ENCODE measurements at regions of chr7 and their contacts with region 1.

Region 1: DNA sequence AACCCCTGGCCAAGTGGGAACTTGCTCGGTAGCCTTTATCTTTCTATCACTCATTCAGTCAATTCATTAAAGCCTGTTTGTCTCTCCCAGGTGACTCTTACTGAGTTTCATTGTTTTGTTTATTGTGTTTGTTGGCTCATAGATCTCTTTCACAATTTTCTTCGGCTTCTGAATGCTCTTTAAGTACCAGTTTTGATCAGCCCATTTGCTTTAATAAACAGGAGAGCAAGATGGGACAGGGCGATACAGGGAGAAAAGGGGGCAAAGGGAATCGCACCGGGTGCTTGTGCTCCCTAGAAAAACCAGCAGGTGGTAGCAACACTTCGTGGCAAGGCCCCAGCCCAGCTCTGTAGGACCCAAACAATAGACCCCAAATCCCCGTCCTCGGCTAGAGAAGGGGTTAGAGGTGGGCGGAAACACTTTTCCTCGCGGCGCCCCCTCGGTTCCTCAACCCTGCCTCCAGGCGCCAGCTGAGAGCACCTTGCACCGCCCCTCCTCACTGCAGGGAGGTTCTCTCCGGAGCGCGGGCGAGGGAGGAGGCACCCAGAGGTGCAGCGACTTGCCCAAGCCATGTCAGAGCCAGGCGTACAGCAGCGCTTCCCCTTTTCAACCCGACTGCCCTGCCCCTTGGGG is 1.0 kb upstream of the EPHB6 start:
- DNase-seq: peak; percentile 42 to 81 (median 62)
- ATAC-seq: peak; percentile 82 to 84
- H3K4me3 Mint-ChIP-seq: peak overlapping the region; percentile 89 to 99 (median 96)
- H3K27ac Mint-ChIP-seq: peak overlapping the region; percentile 33 to 94 (median 88)
- H3K4me1 Mint-ChIP-seq: peaks cover 12 to 25% (median 20%) of the 10 kb centered on the region in 4 donors
- H3K27me3 Mint-ChIP-seq: peaks cover 0 to 3% (median 0%) of the 10 kb centered on the region in 5 donors

Region 2: DNA sequence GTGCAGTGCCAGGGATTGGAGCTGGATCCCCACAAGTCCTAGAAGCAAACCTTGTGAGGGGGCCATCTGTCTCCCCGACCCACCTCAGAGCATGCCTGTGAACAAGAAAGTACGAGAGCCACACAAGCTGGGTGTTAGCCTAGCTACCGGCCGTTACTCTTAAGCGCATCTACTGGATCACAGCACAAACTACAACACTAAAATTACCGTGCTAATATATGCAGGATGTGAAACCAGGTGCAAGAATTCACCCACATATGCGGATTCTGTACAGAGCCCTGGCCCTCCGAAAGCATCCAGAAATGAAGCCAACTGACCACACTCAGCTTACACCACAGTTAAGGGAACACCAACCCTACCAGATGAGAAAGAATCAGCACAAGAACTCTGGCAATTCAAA is 120.6 kb before region 1 on chr7:
- POLR2A ChIA-PET with region 1: no interaction called
- DNase-seq: no peak
- ATAC-seq: no peak
- H3K4me3 Mint-ChIP-seq: no peak overlapping the region
- H3K27ac Mint-ChIP-seq: no peak overlapping the region
- H3K4me1 Mint-ChIP-seq: peaks cover 0 to under 1% (median 0%) of the 10 kb centered on the region in 4 donors
- H3K27me3 Mint-ChIP-seq: no peaks in the 10 kb centered on the region

Region 3: GRCh38 chr7:142866361-142867058 is 12.7 kb after region 1 on chr7:
- POLR2A ChIA-PET with region 1: interaction called, 18 read pairs
- DNase-seq: peak in 3 of 10 donors; percentile 7 to 63 (median 23)
- ATAC-seq: no peak
- H3K4me3 Mint-ChIP-seq: no peak overlapping the region
- H3K27ac Mint-ChIP-seq: peak overlapping the region in 2 of 10 donors; percentile 60 to 71
- H3K4me1 Mint-ChIP-seq: peaks cover 0 to 5% (median 2%) of the 10 kb centered on the region in 4 donors
- H3K27me3 Mint-ChIP-seq: no peaks in the 10 kb centered on the region

Region 4: GRCh38 chr7:143003393-143004051 is 149.7 kb after region 1 on chr7:
- POLR2A ChIA-PET with region 1: interaction called, 12 read pairs
- DNase-seq: peak in 8 of 10 donors; percentile 8 to 74 (median 57)
- ATAC-seq: peak; percentile 75 to 86
- H3K4me3 Mint-ChIP-seq: peak overlapping the region; percentile 70 to 89 (median 84)
- H3K27ac Mint-ChIP-seq: peak overlapping the region in 7 of 10 donors; percentile 2 to 85 (median 33)
- H3K4me1 Mint-ChIP-seq: peaks cover 4 to 13% (median 10%) of the 10 kb centered on the region in 4 donors
- H3K27me3 Mint-ChIP-seq: peaks cover 0 to 3% (median 3%) of the 10 kb centered on the region in 5 donors